Dorsolateral prefrontal cortex (tissue), 120 donors: ENCODE measurements at regions of chr19 and their contacts with region 1.

Region 1: GRCh38 chr19:2070436-2070827 is 19.4 kb upstream of the MKNK2 start:
- DNase-seq: no peak
- H3K4me3 ChIP-seq: no peak overlapping the region
- H3K27ac ChIP-seq: peak overlapping the region in 16 of 59 donors; percentile 23 to 76 (median 53)
- H3K27me3 ChIP-seq: no peaks in the 10 kb centered on the region
- CTCF ChIP-seq: no peak

Region 2: GRCh38 chr19:1929021-1929742 is 141.2 kb before region 1 on chr19:
- intact Hi-C with region 1: loop called (anchors 5 to 10 kb)
- DNase-seq: peak in 9 of 10 donors; percentile 65 to 87 (median 73)
- H3K4me3 ChIP-seq: peak overlapping the region; percentile 22 to 68 (median 52)
- H3K27ac ChIP-seq: peak overlapping the region in 13 of 59 donors; percentile 0 to 70 (median 36)
- H3K27me3 ChIP-seq: no peaks in the 10 kb centered on the region
- CTCF ChIP-seq: peak; percentile 62 to 96 (median 90)